ENCODE measurements at regions of chr15 and their contacts with region 1.

Region 1: DNA sequence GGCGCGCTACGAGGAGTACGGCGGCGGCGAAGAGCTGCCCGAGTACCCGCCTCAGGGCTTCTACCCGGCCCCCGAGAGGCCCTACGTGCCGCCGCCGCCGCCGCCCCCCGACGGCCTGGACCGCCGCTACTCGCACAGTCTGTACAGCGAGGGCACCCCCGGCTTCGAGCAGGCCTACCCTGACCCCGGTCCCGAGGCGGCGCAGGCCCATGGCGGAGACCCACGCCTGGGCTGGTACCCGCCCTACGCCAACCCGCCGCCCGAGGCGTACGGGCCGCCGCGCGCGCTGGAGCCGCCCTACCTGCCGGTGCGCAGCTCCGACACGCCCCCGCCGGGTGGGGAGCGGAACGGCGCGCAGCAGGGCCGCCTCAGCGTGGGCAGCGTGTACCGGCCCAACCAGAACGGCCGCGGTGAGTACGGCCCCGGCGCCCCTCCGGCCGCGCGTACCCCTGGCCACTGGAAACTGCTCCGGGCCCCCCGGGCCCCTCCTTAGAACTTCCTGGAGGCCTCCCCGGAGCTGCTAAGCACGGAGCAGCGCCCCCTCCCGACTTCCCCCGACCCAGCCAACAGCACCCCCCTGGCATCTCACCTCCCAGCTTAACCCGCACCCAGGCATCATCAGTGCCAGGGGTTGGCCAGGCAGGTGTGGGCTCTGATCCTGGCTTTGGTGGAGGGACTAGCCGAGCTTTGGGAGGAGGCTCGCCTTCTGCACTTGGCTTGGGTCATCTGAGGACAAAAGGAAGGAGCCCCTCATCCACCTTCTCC is 1.4 kb downstream of the LOXL1 start:
- DNase-seq: peak; percentile 15
- ATAC-seq: peak; percentile 83
- H3K4me3 ChIP-seq: peak overlapping the region; percentile 57 to 77
- H3K27ac ChIP-seq: peak overlapping the region; percentile 94
- H3K4me1 ChIP-seq: peaks cover 27 to 46% of the 10 kb centered on the region in 2 experiments
- H3K27me3 ChIP-seq: no peaks in the 10 kb centered on the region
- CTCF ChIP-seq: peak; percentile 61 to 76 (median 74)
- POLR2A ChIP-seq: peak; percentile 49
- RAD21 ChIP-seq: no peak

Region 2: DNA sequence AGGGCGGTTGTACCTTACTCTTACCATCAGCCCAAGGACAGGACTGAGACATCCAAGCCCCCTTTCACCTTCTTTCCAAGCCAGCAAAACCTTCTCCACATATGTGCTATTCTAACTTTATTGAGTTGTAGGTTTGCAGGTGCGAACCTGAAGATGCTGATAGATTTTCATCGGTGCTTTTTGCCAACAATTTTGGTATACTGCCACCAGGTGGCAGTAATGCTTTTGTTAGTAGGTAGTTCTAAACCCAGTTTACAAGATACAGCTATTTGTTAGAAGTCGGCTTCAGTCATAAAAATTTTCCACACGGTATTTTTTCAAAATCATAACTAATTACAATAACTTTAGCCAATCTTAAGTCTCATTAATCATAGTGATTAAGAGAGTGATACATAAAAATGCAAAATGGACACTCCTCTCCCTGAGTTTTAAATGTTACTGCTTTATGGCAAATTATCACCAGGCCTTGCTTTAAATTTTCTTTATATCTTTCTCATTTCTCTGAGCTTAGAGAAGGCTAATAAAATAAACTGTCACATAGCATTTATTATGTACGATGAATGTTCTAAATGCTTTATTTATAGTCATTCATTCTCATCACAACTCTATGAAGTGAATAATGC is 53.7 kb before region 1 on chr15:
- CTCF ChIA-PET with region 1: interaction called, 12 read pairs
- POLR2A ChIA-PET with region 1: no interaction called
- RAD21 ChIA-PET with region 1: no interaction called
- intact Hi-C with region 1: no loop called
- DNase-seq: peak; percentile 54
- ATAC-seq: peak; percentile 61; the same call in 1 of the 2 replicates
- H3K4me3 ChIP-seq: no peak overlapping the region
- H3K27ac ChIP-seq: no peak overlapping the region
- H3K4me1 ChIP-seq: no peaks in the 10 kb centered on the region
- H3K27me3 ChIP-seq: peaks cover 45% of the 10 kb centered on the region; the same call in 1 of the 2 replicates
- CTCF ChIP-seq: peak; percentile 70 to 79 (median 70); a peak in 5 of 6 replicates
- POLR2A ChIP-seq: no peak
- RAD21 ChIP-seq: peak; percentile 67

Region 3: DNA sequence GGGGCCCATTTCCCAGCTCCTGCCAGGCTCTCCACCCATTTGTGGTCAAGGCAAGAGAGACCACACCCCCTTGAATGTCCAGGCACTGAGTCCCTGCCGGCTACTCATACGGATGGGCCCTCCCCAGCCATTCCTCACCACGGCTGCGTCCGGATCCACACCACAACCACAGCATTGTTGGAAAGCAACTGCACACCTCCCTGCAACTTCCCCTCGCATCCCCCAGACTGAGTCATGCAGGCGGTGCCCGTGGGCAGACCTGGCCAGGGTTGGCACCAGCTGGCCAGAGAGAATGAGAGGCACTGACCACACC is 29.0 kb after region 1 on chr15:
- CTCF ChIA-PET with region 1: interaction called, 13 read pairs
- POLR2A ChIA-PET with region 1: interaction called, 3 read pairs
- RAD21 ChIA-PET with region 1: no interaction called
- intact Hi-C with region 1: no loop called
- DNase-seq: peak; percentile 79
- ATAC-seq: peak; percentile 81
- H3K4me3 ChIP-seq: peak overlapping the region; percentile 31 to 47
- H3K27ac ChIP-seq: peak overlapping the region; percentile 2; the same call in 1 of the 2 replicates
- H3K4me1 ChIP-seq: peaks cover 16 to 30% of the 10 kb centered on the region in 2 experiments
- H3K27me3 ChIP-seq: no peaks in the 10 kb centered on the region
- CTCF ChIP-seq: no peak
- POLR2A ChIP-seq: no peak
- RAD21 ChIP-seq: no peak